ENCODE measurements at regions of chr10 and their contacts with region 1.

Region 1: GRCh38 chr10:14648005-14648765 is 126.5 kb downstream of the FAM107B start:
- DNase-seq: peak; percentile 79
- H3K4me3 Mint-ChIP-seq: peak overlapping the region; percentile 75
- H3K27ac Mint-ChIP-seq: peak overlapping the region; percentile 96
- H3K4me1 Mint-ChIP-seq: peaks cover 72% of the 10 kb centered on the region
- H3K27me3 Mint-ChIP-seq: no peaks in the 10 kb centered on the region

Region 2: DNA sequence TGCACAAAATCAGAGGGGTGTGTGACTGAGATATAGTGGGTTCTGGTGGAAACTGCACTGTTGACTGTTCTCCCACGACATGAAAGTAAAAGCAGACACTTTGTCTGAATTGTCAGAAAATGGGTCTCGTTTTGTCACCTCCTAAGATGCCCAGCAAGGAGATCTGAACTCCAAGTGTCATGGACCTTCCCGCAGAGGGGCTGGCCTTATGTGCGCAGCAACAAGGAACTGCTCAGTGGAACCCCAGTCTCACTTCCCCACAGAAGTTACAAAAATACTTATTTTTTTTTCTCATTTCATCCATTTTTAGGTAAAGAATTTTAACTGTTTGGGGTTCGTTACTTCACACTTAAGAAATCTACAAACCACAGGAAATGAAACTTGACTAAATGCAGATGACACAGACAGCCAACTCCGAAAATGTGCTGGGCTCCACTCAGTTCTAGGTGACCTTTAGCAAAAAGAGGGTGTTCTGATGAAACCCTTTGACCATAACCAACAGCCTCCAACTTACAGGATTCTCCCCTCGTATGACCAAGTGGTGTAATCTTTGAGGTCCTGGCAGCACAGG is 11.5 kb after region 1 on chr10:
- CTCF ChIA-PET with region 1: interaction called, 5 read pairs
- POLR2A ChIA-PET with region 1: interaction called, 16 read pairs
- DNase-seq: peak; percentile 64
- H3K4me3 Mint-ChIP-seq: peak overlapping the region; percentile 56
- H3K27ac Mint-ChIP-seq: peak overlapping the region; percentile 94
- H3K4me1 Mint-ChIP-seq: peaks cover 63% of the 10 kb centered on the region
- H3K27me3 Mint-ChIP-seq: no peaks in the 10 kb centered on the region

Region 3: GRCh38 chr10:14674376-14675050 is 26.3 kb after region 1 on chr10:
- CTCF ChIA-PET with region 1: no interaction called
- POLR2A ChIA-PET with region 1: no interaction called
- DNase-seq: no peak
- H3K4me3 Mint-ChIP-seq: no peak overlapping the region
- H3K27ac Mint-ChIP-seq: no peak overlapping the region
- H3K4me1 Mint-ChIP-seq: no peaks in the 10 kb centered on the region
- H3K27me3 Mint-ChIP-seq: peaks cover 3% of the 10 kb centered on the region

Region 4: GRCh38 chr10:14844948-14845347 is 196.8 kb after region 1 on chr10:
- CTCF ChIA-PET with region 1: no interaction called
- POLR2A ChIA-PET with region 1: no interaction called
- DNase-seq: no peak
- H3K4me3 Mint-ChIP-seq: no peak overlapping the region
- H3K27ac Mint-ChIP-seq: no peak overlapping the region
- H3K4me1 Mint-ChIP-seq: peaks cover 11% of the 10 kb centered on the region
- H3K27me3 Mint-ChIP-seq: no peaks in the 10 kb centered on the region